OCI-LY7 (cell line): ENCODE measurements at regions of chr1 and their contacts with region 1.

Region 1: DNA sequence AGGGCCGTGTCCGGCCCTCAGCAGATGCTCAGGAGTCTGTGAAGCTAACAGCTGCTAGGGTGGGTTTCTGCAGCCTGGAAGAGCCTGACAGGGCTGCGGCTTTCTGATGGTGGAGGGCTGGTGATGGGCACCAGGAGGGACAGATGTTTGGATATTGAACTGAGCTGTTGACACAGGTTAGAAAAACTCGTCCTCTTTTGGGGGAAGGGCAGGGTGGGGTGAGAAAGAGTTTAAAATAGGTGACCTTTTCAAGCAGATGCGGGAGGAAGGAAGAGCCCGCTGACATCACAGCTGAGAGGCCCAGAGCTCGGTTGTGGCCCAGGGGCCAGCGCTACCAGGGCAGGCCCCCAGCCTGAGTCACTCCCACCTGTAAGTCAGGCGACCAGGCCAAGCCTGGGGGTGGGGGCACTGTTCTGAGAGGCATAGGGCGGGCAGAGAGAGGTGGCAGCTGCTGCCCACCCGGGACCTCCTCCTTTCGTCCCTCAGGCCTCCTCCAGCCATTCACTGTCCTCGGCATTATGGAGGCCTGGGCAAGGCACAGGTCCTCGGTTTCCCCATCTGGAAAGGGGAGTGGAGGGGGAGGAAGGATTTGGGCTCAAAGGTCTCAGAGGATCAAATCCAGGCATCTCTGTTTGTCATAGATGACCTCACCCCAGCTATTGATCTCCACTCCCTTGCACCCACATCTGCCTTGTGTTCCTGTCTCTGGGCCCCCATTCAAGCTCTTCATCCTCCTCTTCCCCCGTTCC is 32.3 kb upstream of the ID3 start:
- DNase-seq: peak; percentile 90
- H3K4me3 ChIP-seq: peak overlapping the region; percentile 60
- H3K27ac ChIP-seq: peak overlapping the region; percentile 94
- H3K4me1 ChIP-seq: peaks cover 97% of the 10 kb centered on the region
- CTCF ChIP-seq: no peak

Region 2: GRCh38 chr1:23607947-23608346 is 16.3 kb after region 1 on chr1:
- CTCF ChIA-PET with region 1: interaction called, 9 read pairs
- POLR2A ChIA-PET with region 1: interaction called, 135 read pairs
- intact Hi-C with region 1: loop called (anchors 1 kb)
- DNase-seq: no peak
- H3K4me3 ChIP-seq: no peak overlapping the region
- H3K27ac ChIP-seq: peak overlapping the region; percentile 67
- H3K4me1 ChIP-seq: peaks cover 96% of the 10 kb centered on the region
- CTCF ChIP-seq: no peak

Region 3: GRCh38 chr1:23613191-23614031 is 21.8 kb after region 1 on chr1:
- CTCF ChIA-PET with region 1: interaction called, 9 read pairs
- POLR2A ChIA-PET with region 1: interaction called, 186 read pairs
- intact Hi-C with region 1: loop called (anchors 1 kb)
- DNase-seq: peak; percentile 96
- H3K4me3 ChIP-seq: peak overlapping the region; percentile 64
- H3K27ac ChIP-seq: peak overlapping the region; percentile 99
- H3K4me1 ChIP-seq: peaks cover 98% of the 10 kb centered on the region
- CTCF ChIP-seq: peak; percentile 46; the same call in 1 of the 2 replicates

Region 4: DNA sequence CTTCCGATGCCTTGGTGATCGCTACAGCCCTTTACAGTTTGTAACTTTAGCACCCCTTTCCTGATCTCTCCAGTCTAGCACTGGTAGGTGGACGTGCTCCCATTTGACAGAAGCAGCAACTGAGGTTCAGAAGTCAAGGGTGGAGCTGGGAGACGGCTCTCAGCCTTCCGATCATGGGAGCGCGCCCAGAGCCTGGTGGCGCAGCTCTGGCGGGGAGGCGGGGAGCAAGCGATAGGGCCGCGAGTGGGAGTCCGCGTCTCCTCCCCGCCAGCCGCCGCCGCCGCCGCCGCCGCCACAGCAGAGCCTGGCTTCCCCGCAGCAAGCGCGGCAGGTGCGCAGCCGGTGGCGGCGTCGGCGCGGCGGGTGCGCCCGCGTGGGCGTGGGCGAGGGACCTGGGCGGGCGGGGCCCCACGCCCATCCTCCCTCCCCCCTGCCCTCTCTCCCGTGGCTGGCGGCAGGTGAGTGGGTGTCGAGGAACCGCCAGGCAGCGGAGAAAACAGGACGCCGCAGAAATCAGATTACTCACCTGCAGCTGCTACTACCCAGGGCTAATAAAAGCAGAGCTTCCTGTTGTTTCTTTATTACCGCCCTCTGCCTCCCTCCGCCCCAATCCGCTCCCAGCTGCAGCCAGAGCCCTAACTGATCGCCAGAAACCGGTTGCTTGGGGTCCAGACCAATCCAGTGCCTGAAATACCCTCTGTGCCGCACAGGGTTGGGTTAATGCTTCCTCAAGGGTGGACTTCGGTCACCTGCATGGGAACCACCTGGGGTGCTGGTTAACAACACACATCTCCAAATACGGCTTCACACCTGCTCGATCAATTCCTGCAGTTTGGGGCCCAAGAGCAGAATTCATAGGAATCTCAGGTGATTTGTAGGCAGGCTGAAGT is 27.9 kb after region 1 on chr1:
- CTCF ChIA-PET with region 1: interaction called, 4 read pairs
- POLR2A ChIA-PET with region 1: interaction called, 186 read pairs
- intact Hi-C with region 1: no loop called
- DNase-seq: peak; percentile 97
- H3K4me3 ChIP-seq: peak overlapping the region; percentile 69
- H3K27ac ChIP-seq: peak overlapping the region; percentile 99
- H3K4me1 ChIP-seq: peaks cover 95% of the 10 kb centered on the region
- CTCF ChIP-seq: no peak

Region 5: GRCh38 chr1:23627069-23627735 is 35.6 kb after region 1 on chr1:
- CTCF ChIA-PET with region 1: no interaction called
- POLR2A ChIA-PET with region 1: interaction called, 186 read pairs
- intact Hi-C with region 1: no loop called
- DNase-seq: peak; percentile 87
- H3K4me3 ChIP-seq: peak overlapping the region; percentile 70
- H3K27ac ChIP-seq: peak overlapping the region; percentile 99
- H3K4me1 ChIP-seq: peaks cover 97% of the 10 kb centered on the region
- CTCF ChIP-seq: no peak

Region 6: DNA sequence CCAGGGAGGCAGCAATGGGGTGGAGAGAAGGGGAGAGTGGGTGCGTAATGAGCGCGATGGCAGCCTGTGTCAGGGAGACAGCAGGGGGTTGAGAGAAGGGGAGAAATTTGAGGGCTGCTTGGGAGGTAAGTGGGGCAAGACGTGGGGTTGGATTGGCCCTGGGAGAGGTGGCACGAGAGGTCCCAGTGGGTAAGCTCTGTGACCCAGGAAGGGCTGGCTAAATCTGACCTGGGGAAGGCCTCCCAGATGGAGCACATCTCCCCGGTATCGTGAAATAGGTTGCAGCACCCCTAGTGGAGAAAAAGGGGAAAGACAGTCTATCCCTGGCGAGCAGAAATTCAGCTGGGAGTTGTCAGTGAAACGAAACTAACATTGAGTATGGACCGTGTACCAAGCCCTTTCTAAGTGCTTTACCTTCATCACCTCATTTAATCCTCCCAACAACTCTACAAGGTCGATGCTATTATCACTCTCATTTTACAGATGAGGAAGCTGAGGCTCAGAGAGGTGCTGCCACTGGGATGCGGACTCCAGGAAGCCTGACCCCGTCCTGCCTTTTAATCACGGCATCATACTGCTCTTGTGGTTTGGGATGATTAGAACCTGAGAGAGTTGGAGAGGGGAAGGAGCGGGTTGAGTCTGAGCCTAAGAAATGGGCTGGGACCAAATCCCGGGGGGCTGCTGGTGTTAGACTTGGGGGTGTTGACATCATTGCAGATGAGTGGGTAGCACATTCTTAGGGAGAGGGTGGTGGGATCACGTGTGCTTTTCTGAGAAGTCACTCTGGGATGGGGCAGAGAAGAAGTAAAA is 43.4 kb after region 1 on chr1:
- CTCF ChIA-PET with region 1: interaction called, 3 read pairs
- POLR2A ChIA-PET with region 1: interaction called, 10 read pairs
- intact Hi-C with region 1: loop called (anchors 2 kb)
- DNase-seq: peak; percentile 82
- H3K4me3 ChIP-seq: peak overlapping the region; percentile 52
- H3K27ac ChIP-seq: peak overlapping the region; percentile 85
- H3K4me1 ChIP-seq: peaks cover 92% of the 10 kb centered on the region
- CTCF ChIP-seq: peak; percentile 93